Mammary epithelial cell (primary cell): ENCODE measurements at regions of chr15 and their contacts with region 1.

Region 1: GRCh38 chr15:71448688-71449114 is 333.4 kb downstream of the THSD4 start:
- DNase-seq: peak; percentile 73
- H3K4me3 ChIP-seq: no peak overlapping the region
- H3K27ac ChIP-seq: peak overlapping the region; percentile 99
- H3K4me1 ChIP-seq: peaks cover 49% of the 10 kb centered on the region
- H3K27me3 ChIP-seq: no peaks in the 10 kb centered on the region
- CTCF ChIP-seq: peak; percentile 93 to 98

Region 2: DNA sequence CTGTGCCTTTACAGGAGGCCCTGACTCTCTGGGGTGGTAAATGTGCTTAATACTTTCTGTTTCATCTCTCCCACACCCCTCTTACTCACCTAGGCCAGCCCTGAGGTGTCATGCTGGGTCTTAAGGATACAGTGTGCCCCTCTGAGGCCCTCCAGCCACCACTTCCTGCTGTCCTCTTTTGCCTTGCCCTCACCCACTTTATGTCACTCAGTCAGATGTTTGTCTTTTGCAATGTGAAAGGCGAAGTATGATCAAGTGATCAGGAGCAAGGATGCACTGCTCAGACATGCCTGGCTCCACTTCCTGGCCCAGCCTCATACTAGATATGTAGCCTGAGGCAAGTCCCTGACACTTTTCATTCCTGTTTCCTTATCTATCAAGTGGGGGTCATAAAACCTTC is 22.6 kb after region 1 on chr15:
- CTCF ChIA-PET with region 1: no interaction called
- dilution Hi-C with region 1: no loop called
- in situ Hi-C with region 1: no loop called
- intact Hi-C with region 1: loop called (anchors 1 kb)
- DNase-seq: peak; percentile 91
- H3K4me3 ChIP-seq: no peak overlapping the region
- H3K27ac ChIP-seq: peak overlapping the region; percentile 85
- H3K4me1 ChIP-seq: peaks cover 19% of the 10 kb centered on the region
- H3K27me3 ChIP-seq: no peaks in the 10 kb centered on the region
- CTCF ChIP-seq: no peak

Region 3: GRCh38 chr15:71559098-71559497 is 110.4 kb after region 1 on chr15:
- CTCF ChIA-PET with region 1: no interaction called
- dilution Hi-C with region 1: no loop called
- in situ Hi-C with region 1: no loop called
- intact Hi-C with region 1: loop called (anchors 1 kb)
- DNase-seq: peak; percentile 89
- H3K4me3 ChIP-seq: peak overlapping the region in 2 of 3 experiments; percentile 29 to 30
- H3K27ac ChIP-seq: peak overlapping the region; percentile 86
- H3K4me1 ChIP-seq: peaks cover 56% of the 10 kb centered on the region
- H3K27me3 ChIP-seq: no peaks in the 10 kb centered on the region
- CTCF ChIP-seq: no peak

Region 4: GRCh38 chr15:71651750-71652186 is 203.1 kb after region 1 on chr15:
- CTCF ChIA-PET with region 1: no interaction called
- dilution Hi-C with region 1: no loop called
- in situ Hi-C with region 1: loop called (anchors 10 kb)
- intact Hi-C with region 1: loop called (anchors 1 kb)
- DNase-seq: peak; percentile 65
- H3K4me3 ChIP-seq: no peak overlapping the region
- H3K27ac ChIP-seq: no peak overlapping the region
- H3K4me1 ChIP-seq: peaks cover 8% of the 10 kb centered on the region
- H3K27me3 ChIP-seq: no peaks in the 10 kb centered on the region
- CTCF ChIP-seq: peak; percentile 51 to 77

Region 5: GRCh38 chr15:71743861-71744382 is 295.2 kb after region 1 on chr15:
- CTCF ChIA-PET with region 1: no interaction called
- dilution Hi-C with region 1: no loop called
- in situ Hi-C with region 1: loop called in 1 of 2 experiments (anchors 5 kb)
- intact Hi-C with region 1: loop called (anchors 5 kb)
- DNase-seq: peak; percentile 21
- H3K4me3 ChIP-seq: no peak overlapping the region
- H3K27ac ChIP-seq: no peak overlapping the region
- H3K4me1 ChIP-seq: peaks cover 27% of the 10 kb centered on the region
- H3K27me3 ChIP-seq: no peaks in the 10 kb centered on the region
- CTCF ChIP-seq: peak; percentile 57 to 71